ENCODE measurements at regions of chr12 and their contacts with region 1.

Region 1: GRCh38 chr12:127108360-127109215 is 1158.4 kb upstream of the TMEM132C start:
- DNase-seq: no peak
- H3K4me3 ChIP-seq: no peak overlapping the region
- CTCF ChIP-seq: peak; percentile 63

Region 2: GRCh38 chr12:126268222-126268621 is 840.4 kb before region 1 on chr12:
- CTCF ChIA-PET with region 1: no interaction called
- POLR2A ChIA-PET with region 1: no interaction called
- DNase-seq: no peak
- H3K4me3 ChIP-seq: no peak overlapping the region
- CTCF ChIP-seq: no peak

Region 3: DNA sequence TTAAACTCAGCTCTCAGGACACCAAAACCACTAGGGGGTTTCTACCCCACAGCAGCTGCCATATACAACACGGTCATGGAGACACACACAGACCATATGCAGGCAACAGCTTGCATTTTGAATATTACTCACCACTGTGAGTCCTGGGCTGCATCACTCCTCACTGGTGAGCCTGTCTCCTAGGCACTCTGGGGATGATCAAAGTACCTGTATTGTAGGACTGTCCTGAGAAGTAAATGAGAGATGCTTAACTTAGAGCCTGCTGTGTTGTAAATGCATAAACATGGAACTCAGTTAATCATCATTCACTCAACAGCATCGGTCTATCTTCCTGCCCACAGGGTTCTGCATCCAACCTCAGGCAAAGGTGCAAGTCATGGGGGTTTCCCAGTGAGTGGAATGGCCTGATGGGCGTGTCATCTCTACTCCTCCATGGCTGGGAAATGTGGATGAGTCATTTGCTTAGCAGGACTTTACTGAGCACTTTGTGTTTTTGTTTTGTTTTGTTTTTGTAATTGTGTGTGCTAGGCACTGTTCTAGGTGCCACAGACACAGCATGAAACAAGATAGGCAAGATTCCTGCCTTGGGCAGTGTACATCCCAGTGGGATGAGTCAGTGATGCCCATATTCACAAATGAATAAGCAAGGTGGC is 17.1 kb after region 1 on chr12:
- CTCF ChIA-PET with region 1: interaction called, 14 read pairs
- POLR2A ChIA-PET with region 1: no interaction called
- DNase-seq: peak; percentile 53
- H3K4me3 ChIP-seq: no peak overlapping the region
- CTCF ChIP-seq: no peak

Region 4: GRCh38 chr12:127293507-127294310 is 185.1 kb after region 1 on chr12:
- CTCF ChIA-PET with region 1: interaction called, 221 read pairs
- POLR2A ChIA-PET with region 1: interaction called, 3 read pairs
- DNase-seq: no peak
- H3K4me3 ChIP-seq: no peak overlapping the region
- CTCF ChIP-seq: peak; percentile 96

Region 5: GRCh38 chr12:127355061-127355841 is 246.7 kb after region 1 on chr12:
- CTCF ChIA-PET with region 1: interaction called, 67 read pairs
- POLR2A ChIA-PET with region 1: no interaction called
- DNase-seq: no peak
- H3K4me3 ChIP-seq: no peak overlapping the region
- CTCF ChIP-seq: peak; percentile 64

Region 6: GRCh38 chr12:127381048-127381668 is 272.6 kb after region 1 on chr12:
- CTCF ChIA-PET with region 1: interaction called, 50 read pairs
- POLR2A ChIA-PET with region 1: no interaction called
- DNase-seq: no peak
- H3K4me3 ChIP-seq: peak overlapping the region; percentile 58
- CTCF ChIP-seq: peak; percentile 79